Endothelial cell of umbilical vein (primary cell): ENCODE measurements at regions of chr13 and their contacts with region 1.

Region 1: GRCh38 chr13:44191504-44192171 is 182.0 kb upstream of the SERP2 start:
- DNase-seq: peak; percentile 71
- H3K4me3 ChIP-seq: no peak overlapping the region
- H3K27ac ChIP-seq: no peak overlapping the region
- H3K4me1 ChIP-seq: no peaks in the 10 kb centered on the region
- H3K27me3 ChIP-seq: no peaks in the 10 kb centered on the region
- CTCF ChIP-seq: peak; percentile 46 to 71
- POLR2A ChIP-seq: no peak

Region 2: GRCh38 chr13:43905435-43906031 is 286.1 kb before region 1 on chr13:
- CTCF ChIA-PET with region 1: interaction called, 4 read pairs
- POLR2A ChIA-PET with region 1: no interaction called
- dilution Hi-C with region 1: no loop called
- intact Hi-C with region 1: loop called (anchors 2 kb)
- DNase-seq: peak; percentile 68
- H3K4me3 ChIP-seq: no peak overlapping the region
- H3K27ac ChIP-seq: no peak overlapping the region
- H3K4me1 ChIP-seq: no peaks in the 10 kb centered on the region
- H3K27me3 ChIP-seq: peaks cover 0 to 6% of the 10 kb centered on the region in 2 experiments
- CTCF ChIP-seq: peak; percentile 43 to 45
- POLR2A ChIP-seq: no peak

Region 3: GRCh38 chr13:44243198-44243857 is 51.7 kb after region 1 on chr13:
- CTCF ChIA-PET with region 1: interaction called, 13 read pairs
- POLR2A ChIA-PET with region 1: no interaction called
- dilution Hi-C with region 1: no loop called
- intact Hi-C with region 1: loop called (anchors 1 kb)
- DNase-seq: peak; percentile 92
- H3K4me3 ChIP-seq: no peak overlapping the region
- H3K27ac ChIP-seq: peak overlapping the region; percentile 69
- H3K4me1 ChIP-seq: peaks cover 11% of the 10 kb centered on the region
- H3K27me3 ChIP-seq: no peaks in the 10 kb centered on the region
- CTCF ChIP-seq: peak; percentile 53 to 73
- POLR2A ChIP-seq: no peak

Region 4: DNA sequence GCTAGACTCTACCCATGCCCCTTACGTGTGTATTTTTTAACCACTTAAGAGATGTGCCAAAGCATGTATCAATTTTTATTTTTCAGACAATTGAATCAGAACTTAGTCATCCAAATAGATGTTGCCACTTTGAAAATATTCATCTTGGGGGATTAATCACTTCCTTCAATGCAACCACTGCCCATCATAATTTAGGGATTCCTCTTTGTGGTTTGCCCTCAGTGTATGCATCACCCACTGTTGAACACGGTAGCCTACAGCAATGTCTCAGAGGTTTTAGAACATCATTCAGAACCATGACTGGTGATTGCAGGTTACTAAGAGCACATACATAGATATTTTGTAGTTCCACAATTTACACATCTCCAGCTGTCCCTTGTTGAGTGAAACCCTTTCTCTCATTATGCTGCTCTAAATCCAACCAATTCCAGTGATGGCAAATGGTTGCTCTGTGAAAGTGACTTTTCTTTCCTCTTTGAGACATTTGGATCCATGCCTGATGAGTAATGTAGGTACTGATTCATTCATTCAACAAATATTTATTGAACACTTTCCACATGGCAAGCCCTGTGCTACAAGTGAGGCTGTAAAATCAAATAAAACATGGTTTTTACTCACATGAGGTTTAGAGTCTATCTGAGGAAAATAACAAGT is 121.4 kb after region 1 on chr13:
- CTCF ChIA-PET with region 1: no interaction called
- POLR2A ChIA-PET with region 1: no interaction called
- dilution Hi-C with region 1: no loop called
- intact Hi-C with region 1: loop called (anchors 1 kb)
- DNase-seq: peak; percentile 87
- H3K4me3 ChIP-seq: no peak overlapping the region
- H3K27ac ChIP-seq: peak overlapping the region; percentile 81
- H3K4me1 ChIP-seq: peaks cover 23% of the 10 kb centered on the region
- H3K27me3 ChIP-seq: no peaks in the 10 kb centered on the region
- CTCF ChIP-seq: no peak
- POLR2A ChIP-seq: no peak

Region 5: GRCh38 chr13:44364348-44365049 is 172.9 kb after region 1 on chr13:
- CTCF ChIA-PET with region 1: interaction called, 6 read pairs
- POLR2A ChIA-PET with region 1: interaction called, 3 read pairs
- dilution Hi-C with region 1: no loop called
- intact Hi-C with region 1: loop called (anchors 5 kb)
- DNase-seq: peak; percentile 90
- H3K4me3 ChIP-seq: no peak overlapping the region
- H3K27ac ChIP-seq: peak overlapping the region; percentile 89
- H3K4me1 ChIP-seq: peaks cover 51% of the 10 kb centered on the region
- H3K27me3 ChIP-seq: no peaks in the 10 kb centered on the region
- CTCF ChIP-seq: no peak
- POLR2A ChIP-seq: peak; percentile 25

Region 6: DNA sequence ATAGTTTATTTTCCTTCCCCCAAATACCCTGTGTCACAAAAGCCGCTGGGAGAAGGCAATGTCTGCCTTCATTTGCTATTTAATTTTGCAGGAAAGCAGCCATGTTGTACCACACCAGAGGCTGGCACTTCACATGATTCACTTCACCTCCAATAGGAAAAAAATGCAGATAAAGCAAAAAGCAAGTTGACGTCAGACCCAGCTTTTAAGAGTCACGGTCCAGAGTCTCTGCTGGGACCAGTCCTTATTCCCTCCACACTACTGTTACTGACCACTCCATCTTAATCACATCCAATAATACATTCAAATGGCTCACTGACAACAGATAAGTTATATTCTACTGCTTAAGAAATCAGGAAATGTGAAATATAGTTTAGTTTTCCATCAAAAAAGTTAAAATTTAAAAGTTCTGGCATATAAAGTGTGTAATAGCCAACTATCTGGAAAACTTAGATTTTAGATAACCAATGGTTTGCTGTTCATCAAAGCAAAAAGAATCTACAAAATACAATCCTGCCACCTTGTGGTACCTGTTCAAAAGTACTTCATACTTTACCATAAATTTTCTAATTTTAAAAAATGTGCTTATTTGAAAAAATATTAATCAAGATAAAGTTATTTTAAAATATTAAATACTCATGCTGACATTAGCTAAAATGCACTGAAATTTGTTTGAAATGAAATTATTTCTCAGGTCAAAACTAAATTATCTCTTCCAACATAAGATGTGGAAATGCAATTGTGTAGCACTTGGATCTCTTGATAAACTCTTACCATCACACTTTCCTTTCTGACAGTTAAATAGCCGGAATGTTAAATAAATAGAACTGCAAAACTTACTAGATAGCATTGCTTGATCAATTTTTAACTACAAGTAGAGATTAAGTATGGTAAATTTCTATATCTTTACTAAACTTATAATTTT is 279.3 kb after region 1 on chr13:
- CTCF ChIA-PET with region 1: no interaction called
- POLR2A ChIA-PET with region 1: no interaction called
- dilution Hi-C with region 1: no loop called
- intact Hi-C with region 1: loop called (anchors 1 kb)
- DNase-seq: peak; percentile 46
- H3K4me3 ChIP-seq: peak overlapping the region in 1 of 3 experiments; percentile 50
- H3K27ac ChIP-seq: peak overlapping the region; percentile 51
- H3K4me1 ChIP-seq: peaks cover 29% of the 10 kb centered on the region
- H3K27me3 ChIP-seq: no peaks in the 10 kb centered on the region
- CTCF ChIP-seq: peak; percentile 6 to 20
- POLR2A ChIP-seq: no peak